Psoas muscle (tissue), 8 donors: ENCODE measurements at regions of chr2 and their contacts with region 1.

Region 1: DNA sequence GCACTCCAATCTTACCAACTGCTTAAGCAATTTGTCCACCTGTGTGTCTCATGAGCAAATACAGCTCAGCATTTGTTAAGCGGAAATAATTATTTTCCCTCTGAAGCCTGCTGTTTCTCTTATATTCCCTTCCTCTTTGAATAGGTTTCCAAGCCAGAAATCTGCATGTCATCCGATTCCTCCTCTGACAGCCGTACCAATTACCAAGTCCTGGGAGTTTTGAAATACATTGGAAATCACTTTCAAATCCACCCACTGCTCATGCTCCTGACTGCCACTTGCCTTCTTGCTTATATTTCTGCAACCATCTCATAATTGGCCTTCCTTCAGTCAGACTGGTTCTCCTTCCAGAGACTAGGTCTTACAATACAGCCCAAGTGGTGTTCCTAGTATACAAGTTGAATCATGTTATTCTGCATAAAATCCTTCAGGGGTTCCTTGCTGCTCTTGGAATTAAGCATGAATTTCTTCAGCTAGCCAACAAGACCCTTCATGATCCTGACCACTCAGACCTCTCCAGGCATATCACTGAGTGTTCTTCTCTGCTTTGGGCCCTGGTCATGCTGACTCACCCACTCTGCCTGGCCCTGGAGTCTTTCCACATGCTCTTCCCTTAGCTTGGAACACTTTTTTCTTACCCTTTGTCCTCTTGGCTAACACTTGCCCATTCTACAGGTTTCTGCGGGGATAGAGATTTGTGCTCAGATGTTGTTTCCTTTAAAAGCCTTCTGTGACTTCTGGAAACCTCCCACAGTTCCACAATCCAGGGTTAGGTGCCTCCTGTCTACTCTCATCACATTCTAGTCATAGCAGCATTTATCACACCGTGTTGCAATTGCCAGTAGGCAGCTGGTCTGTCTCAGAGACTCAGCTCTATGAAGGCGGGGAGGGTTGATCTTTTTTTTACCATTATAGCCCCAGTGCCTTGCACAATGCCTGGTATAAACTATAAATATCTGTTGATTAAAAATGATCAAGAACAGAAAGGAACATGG is 157.6 kb downstream of the ARL6IP6 start:
- DNase-seq: no peak
- ATAC-seq: no peak
- H3K4me3 ChIP-seq: no peak overlapping the region
- H3K27ac ChIP-seq: no peak overlapping the region
- H3K4me1 ChIP-seq: no peaks in the 10 kb centered on the region
- H3K27me3 ChIP-seq: no peaks in the 10 kb centered on the region
- CTCF ChIP-seq: no peak

Region 2: GRCh38 chr2:152781175-152781574 is 94.8 kb before region 1 on chr2:
- intact Hi-C with region 1: no loop called
- DNase-seq: no peak
- ATAC-seq: no peak
- H3K4me3 ChIP-seq: no peak overlapping the region
- H3K27ac ChIP-seq: no peak overlapping the region
- H3K4me1 ChIP-seq: no peaks in the 10 kb centered on the region
- H3K27me3 ChIP-seq: no peaks in the 10 kb centered on the region
- CTCF ChIP-seq: no peak

Region 3: DNA sequence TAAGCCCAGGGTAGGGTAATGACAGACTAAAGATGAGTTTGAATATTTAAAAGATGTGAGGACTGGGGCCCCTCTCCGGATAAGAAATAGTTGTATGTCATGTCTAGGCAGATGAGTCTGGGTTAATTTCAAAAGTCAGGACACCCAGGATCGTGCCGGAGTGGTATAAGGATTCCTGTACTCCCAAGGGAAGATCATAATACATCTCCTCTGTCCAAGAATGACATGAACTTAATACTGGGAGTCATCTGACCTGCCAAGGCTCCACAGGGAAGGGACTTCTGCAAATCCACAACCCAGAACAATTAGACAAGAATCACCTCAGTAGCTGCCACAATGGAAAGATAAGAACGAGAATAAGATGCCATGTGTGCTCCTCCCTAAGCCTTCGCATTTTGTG is 585.5 kb after region 1 on chr2:
- intact Hi-C with region 1: loop called in 1 of 2 experiments (anchors 10 kb)
- DNase-seq: no peak
- ATAC-seq: no peak
- H3K4me3 ChIP-seq: no peak overlapping the region
- H3K27ac ChIP-seq: no peak overlapping the region
- H3K4me1 ChIP-seq: no peaks in the 10 kb centered on the region
- H3K27me3 ChIP-seq: no peaks in the 10 kb centered on the region
- CTCF ChIP-seq: no peak